Breast epithelium (tissue), 4 donors: ENCODE measurements at regions of chr19 and their contacts with region 1.

Region 1: GRCh38 chr19:29634423-29635130 is 28.5 kb downstream of the POP4 start:
- DNase-seq: no peak
- H3K4me3 ChIP-seq: no peak overlapping the region
- H3K27ac ChIP-seq: no peak overlapping the region
- H3K4me1 ChIP-seq: no peaks in the 10 kb centered on the region
- H3K27me3 ChIP-seq: no peaks in the 10 kb centered on the region
- CTCF ChIP-seq: no peak
- POLR2A ChIP-seq: no peak

Region 2: DNA sequence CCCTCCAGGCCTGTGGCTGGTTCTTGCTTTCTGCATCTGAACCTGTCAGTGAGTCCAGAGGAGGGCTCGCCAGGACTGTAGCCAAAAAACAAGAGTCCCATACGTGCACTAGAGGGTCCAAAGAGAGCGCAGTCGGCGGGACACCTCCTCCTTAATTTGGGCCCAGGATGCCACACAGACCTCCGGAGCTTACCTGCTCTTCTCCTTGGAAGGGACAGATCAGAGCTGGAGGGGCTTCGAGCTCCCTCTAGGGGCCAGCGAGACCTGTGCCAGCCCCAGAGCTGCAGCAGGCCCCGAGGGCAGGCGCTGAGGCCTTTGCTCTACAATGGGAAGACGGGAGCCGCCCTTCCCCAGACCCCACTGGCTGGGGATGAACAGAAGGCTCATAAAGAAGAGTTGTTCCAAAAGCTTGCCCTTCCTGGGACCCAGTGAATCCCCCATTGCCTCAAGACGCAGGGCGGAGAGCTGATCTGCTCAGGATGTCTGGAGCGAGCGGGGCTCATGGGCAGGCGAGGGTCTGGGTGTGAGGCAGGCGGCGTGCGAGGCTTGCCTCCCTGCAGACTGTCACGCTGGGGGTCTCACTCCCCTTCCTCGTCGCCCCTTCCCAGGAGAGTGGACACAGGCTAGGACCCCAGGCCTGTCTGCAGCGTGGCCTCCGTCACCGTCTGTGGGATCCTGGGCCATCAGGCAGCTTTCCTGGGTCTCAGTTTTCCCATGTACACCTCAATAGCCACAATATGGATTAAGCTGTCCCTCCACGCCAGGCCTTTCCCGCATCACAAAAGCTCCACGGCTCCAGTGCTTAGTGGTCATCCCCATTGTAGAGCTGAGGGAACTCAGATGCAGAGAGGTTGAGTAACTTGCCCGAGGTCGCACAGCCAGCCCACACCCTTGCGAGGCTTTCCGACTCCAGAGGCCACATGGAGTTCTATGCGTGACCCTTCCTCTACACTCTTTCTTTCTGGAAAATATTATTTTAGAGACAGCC is 155.7 kb before region 1 on chr19:
- intact Hi-C with region 1: no loop called
- DNase-seq: no peak
- H3K4me3 ChIP-seq: no peak overlapping the region
- H3K27ac ChIP-seq: no peak overlapping the region
- H3K4me1 ChIP-seq: no peaks in the 10 kb centered on the region
- H3K27me3 ChIP-seq: peaks cover 0 to 5% of the 10 kb centered on the region in 2 donors
- CTCF ChIP-seq: no peak
- POLR2A ChIP-seq: no peak

Region 3: GRCh38 chr19:29610563-29611271 is 23.9 kb before region 1 on chr19:
- intact Hi-C with region 1: no loop called
- DNase-seq: peak; percentile 76 to 80
- H3K4me3 ChIP-seq: no peak overlapping the region
- H3K27ac ChIP-seq: no peak overlapping the region
- H3K4me1 ChIP-seq: no peaks in the 10 kb centered on the region
- H3K27me3 ChIP-seq: no peaks in the 10 kb centered on the region
- CTCF ChIP-seq: peak; percentile 44 to 85 (median 79)
- POLR2A ChIP-seq: no peak

Region 4: DNA sequence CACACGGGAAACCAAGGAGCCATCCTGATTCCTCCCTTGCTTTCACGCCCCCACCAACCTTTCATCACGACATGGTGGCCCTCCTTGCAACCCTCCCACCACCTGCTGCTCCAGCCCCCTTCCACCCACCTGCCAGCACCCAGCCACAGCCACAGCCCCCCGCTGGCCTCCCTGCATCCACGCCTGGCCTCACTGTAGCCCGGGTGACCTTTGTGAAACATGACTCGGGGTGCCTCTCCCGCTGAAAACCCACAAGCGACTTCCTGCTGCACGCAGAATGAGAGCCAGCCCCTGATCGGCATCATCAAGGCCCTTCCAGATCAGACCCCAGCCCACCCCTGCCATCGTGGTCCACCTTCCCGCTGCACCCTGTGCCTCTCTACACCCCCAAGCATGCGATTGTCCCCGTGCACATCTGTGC is 13.6 kb before region 1 on chr19:
- intact Hi-C with region 1: loop called (anchors 1 kb)
- DNase-seq: no peak
- H3K4me3 ChIP-seq: no peak overlapping the region
- H3K27ac ChIP-seq: no peak overlapping the region
- H3K4me1 ChIP-seq: no peaks in the 10 kb centered on the region
- H3K27me3 ChIP-seq: no peaks in the 10 kb centered on the region
- CTCF ChIP-seq: no peak
- POLR2A ChIP-seq: no peak